ENCODE measurements at regions of chr7 and their contacts with region 1.

Region 1: DNA sequence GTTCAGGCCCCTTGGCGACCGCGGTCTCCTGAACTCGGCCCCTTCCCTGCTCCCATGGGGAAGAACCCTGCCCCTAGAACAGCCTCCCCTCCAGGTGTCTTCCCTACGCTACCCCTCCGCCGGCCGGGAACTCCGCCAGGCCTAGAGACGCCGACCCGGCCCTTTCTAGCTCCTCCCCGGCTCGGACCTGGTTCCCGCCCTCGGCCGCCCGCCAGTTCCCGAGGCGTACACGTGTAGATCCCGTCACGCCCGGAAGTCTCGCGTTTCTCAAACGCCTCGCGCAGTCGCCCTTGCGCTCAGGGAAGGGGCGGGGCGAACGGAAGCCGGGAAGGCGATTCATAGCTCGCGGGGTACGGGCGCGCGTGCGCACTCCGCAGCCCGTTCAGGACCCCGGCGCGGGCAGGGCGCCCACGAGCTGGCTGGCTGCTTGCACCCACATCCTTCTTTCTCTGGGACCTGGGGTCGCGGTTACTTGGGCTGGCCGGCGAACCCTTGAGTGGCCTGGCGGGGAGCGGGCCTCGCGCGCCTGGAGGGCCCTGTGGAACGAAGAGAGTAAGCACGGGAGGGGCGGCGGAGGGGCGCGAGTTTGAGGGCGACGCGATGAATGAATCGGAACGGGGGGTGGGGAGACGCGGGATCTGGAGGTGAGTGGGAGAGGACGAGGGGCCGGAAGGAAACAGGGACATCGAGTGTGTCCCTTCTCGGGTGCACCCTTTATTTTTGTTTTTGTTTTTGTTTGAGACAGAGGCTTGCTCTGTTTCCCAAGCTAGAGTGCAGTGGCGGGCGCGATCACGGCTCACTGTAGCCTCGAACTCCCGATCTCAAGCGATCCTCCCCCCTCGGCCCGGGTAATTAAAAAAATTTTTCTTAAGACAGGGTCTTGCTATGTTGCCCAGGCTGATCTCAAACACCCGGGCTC is at the start of gene POP7:
- DNase-seq: peak; percentile 97
- H3K4me3 ChIP-seq: peak within 1 kb of the TSS; percentile 87
- H3K27ac ChIP-seq: peak within 1 kb of the TSS; percentile 82
- H3K27me3 ChIP-seq: peaks cover 2% of the 10 kb centered on the region
- CTCF ChIP-seq: no peak
- polyA plus RNA-seq, gene POP7: 17.7 and 20.0 TPM in 2 replicates

Region 2: GRCh38 chr7:100691676-100692577 is 14.1 kb before region 1 on chr7:
- CTCF ChIA-PET with region 1: interaction called, 31 read pairs
- POLR2A ChIA-PET with region 1: interaction called, 19 read pairs
- DNase-seq: no peak
- H3K4me3 ChIP-seq: peak overlapping the region; percentile 80
- H3K27ac ChIP-seq: no peak overlapping the region
- H3K27me3 ChIP-seq: peaks cover 2% of the 10 kb centered on the region
- CTCF ChIP-seq: peak; percentile 90

Region 3: DNA sequence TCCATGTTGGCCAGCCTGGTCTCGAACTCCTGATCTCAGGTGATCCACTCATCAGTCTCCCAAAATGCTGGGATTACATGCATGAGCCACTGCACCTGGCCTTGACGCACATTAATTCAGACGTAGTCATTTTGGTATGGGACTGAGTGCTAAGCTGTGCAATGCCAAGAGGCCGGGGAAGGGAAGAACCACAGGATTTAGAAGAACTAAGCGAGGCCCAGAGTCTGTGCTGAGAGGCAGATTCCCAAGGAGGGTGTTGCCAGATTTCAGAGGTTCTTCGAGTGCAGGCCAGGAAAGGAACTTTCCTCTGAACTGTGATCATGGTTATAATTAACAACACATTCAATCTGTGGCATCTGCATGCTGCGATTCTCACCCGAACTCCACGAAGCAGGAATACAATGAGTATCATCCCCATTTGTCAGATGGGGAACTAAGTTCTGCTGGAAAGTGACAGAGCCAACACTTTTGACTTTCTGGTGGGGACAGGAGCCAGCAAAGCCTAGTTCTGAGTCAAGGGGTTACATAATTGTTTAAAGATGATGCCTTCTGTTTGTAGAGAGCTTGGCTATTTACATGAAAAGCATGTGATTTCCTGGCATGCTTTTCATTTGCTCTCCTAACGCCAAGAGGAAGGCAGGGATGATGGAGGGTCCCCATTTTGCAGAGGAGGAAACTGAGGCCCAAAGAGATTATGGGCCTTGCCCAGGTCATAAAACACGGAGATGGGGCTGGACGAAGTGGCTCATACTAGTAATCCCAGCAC is 21.2 kb after region 1 on chr7:
- CTCF ChIA-PET with region 1: interaction called, 25 read pairs
- POLR2A ChIA-PET with region 1: interaction called, 16 read pairs
- DNase-seq: no peak
- H3K4me3 ChIP-seq: no peak overlapping the region
- H3K27ac ChIP-seq: peak overlapping the region; percentile 62
- H3K27me3 ChIP-seq: peaks cover 31% of the 10 kb centered on the region
- CTCF ChIP-seq: no peak

Region 4: GRCh38 chr7:100803398-100804233 is 97.6 kb after region 1 on chr7:
- CTCF ChIA-PET with region 1: interaction called, 14 read pairs
- POLR2A ChIA-PET with region 1: interaction called, 5 read pairs
- DNase-seq: peak; percentile 63
- H3K4me3 ChIP-seq: no peak overlapping the region
- H3K27ac ChIP-seq: peak overlapping the region; percentile 73
- H3K27me3 ChIP-seq: no peaks in the 10 kb centered on the region
- CTCF ChIP-seq: no peak

Region 5: DNA sequence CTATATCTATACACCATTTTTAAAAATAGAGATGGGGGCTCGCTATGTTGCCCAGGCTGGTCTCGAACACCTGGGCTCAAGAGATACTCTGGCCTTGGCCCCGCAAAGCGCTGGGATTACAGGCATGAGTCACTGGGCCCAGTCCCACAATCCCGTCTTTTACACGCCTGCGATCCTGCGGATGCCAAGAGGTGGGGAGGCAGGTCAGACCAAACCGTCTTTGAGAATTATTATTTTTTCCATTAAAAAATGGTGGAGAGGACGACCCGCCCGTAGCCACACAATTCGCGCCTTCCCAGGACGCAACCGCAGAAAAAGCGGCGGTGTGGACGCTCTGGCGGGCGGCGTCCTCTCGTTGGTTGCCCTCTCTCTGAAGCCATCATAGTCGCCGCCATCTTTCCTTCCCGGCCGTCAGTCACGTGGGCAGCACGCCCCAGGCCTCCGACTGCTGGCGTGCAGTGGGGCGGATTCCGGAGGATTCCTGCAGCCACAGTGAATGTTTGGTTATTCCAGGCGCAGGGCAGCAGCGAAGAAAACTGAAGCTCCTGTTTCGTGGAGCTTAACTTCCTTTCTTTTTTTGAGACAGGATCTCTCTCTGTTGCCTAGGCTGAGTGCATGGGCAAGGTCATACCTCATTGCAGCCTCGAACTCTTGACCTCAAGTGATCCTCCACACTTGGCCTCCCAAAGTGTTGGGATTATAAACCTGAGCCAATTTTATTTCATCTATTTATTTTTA is 131.3 kb after region 1 on chr7:
- CTCF ChIA-PET with region 1: interaction called, 14 read pairs
- POLR2A ChIA-PET with region 1: interaction called, 3 read pairs
- DNase-seq: peak; percentile 77
- H3K4me3 ChIP-seq: peak overlapping the region; percentile 52
- H3K27ac ChIP-seq: peak overlapping the region; percentile 61
- H3K27me3 ChIP-seq: no peaks in the 10 kb centered on the region
- CTCF ChIP-seq: no peak

Region 6: DNA sequence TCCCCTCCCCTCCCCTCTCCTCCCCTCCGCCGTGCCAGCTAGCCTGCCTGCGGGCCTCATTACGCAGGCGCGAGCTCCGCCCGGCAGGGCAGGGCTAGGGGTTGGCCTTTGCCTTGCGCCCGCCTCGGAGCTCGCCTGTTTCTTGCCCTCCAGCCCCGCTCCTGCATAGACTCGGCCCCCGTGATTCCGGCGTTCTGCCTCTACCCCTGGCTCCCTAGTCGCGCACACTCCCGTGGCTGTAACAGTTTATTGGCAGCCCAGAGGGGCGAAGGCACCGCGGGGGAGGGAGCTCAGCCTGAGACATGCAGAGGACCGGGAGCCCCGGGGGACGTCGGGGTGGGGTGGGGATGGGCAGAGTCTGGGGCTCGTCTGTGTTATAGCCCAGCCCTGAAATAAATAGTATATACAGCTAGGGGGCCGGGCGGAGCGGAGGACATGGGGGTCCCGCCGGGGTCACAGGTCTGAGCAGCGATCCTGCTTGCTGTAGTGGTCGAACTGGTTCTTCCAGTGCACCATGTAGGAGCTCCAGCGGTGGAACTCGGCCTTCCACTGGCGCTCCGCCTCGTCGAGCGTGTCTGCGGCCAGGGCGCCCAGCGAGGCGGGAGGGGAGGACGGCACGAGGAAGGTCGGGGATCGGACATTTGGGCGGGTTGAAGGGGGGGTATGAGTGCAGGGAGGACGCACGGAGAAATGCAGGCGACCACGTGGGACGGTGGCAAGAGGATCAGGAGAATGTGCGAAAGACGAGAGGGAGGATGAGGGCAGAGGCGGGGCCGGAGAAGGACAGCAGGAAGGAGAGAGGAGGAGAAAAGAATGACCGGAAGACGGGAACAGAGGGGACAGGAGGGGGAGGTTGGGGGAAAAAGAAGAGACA is 184.0 kb after region 1 on chr7:
- CTCF ChIA-PET with region 1: interaction called, 8 read pairs
- POLR2A ChIA-PET with region 1: interaction called, 12 read pairs
- DNase-seq: peak; percentile 85
- H3K4me3 ChIP-seq: peak overlapping the region; percentile 63
- H3K27ac ChIP-seq: peak overlapping the region; percentile 75
- H3K27me3 ChIP-seq: peaks cover 2% of the 10 kb centered on the region
- CTCF ChIP-seq: no peak